Ovary (tissue), 10 donors: ENCODE measurements at regions of chr5 and their contacts with region 1.

Region 1: DNA sequence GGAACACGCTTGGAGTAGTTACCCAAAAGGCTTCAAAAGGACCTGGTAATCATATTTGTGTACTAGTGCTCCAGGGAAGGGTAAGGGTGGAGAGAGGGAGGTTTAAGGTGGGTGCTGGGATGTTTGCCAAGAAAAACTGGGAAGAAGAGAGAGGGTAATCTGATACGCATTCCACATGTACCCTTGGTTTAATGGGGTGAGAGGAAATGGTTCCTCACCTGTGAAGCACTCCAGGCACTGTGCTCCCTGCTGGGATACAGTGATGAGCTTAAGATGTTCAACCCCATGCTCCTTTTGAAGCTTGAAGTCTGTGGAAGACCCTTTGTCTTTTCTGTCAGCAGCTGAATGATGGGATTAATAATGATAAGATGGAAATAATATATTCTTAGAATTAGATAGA is 98.4 kb downstream of the COX7C start:
- DNase-seq: no peak
- H3K4me3 ChIP-seq: no peak overlapping the region
- H3K27ac ChIP-seq: no peak overlapping the region
- H3K4me1 ChIP-seq: no peaks in the 10 kb centered on the region
- H3K27me3 ChIP-seq: no peaks in the 10 kb centered on the region
- CTCF ChIP-seq: no peak
- EP300 ChIP-seq: no peak
- POLR2A ChIP-seq: no peak

Region 2: DNA sequence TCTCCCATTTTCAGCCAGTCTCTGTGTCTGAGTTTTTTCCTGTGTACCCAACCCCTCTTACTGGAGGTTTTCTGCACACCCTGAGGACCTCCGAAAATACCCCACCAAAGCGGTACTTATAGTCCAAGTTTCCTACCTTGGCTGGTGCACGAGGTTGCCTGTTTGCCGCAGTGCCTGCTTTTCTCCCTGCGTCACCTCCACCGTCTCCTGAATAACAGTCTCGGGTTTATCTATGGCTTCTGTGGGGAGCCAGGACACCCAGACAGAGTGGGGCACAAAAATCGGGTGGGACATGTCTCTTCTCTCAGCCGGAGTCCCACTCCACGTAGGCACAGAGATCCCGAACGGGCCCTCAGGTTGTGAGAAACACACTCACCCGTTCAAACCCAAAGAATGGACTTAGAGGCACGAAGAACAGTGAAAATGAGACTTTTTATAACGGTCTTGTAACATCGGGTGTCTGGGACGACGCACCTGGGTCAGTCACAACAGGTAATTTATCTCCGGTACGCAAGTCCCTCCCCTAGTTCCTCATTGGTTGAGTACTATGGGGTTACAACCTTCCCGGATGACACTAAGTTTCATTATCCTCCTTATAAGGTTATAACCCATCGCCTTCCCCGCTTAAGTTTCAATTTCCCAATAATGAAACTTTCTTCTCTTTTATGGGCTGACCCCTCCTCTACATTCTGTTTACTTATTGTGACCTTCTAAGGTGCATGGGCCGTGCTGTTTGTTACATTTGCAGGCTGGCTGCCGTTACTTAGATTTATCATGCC is 1068.6 kb before region 1 on chr5:
- intact Hi-C with region 1: no loop called
- DNase-seq: no peak
- H3K4me3 ChIP-seq: no peak overlapping the region
- H3K27ac ChIP-seq: no peak overlapping the region
- H3K4me1 ChIP-seq: no peaks in the 10 kb centered on the region
- H3K27me3 ChIP-seq: no peaks in the 10 kb centered on the region
- CTCF ChIP-seq: no peak
- EP300 ChIP-seq: no peak
- POLR2A ChIP-seq: no peak

Region 3: DNA sequence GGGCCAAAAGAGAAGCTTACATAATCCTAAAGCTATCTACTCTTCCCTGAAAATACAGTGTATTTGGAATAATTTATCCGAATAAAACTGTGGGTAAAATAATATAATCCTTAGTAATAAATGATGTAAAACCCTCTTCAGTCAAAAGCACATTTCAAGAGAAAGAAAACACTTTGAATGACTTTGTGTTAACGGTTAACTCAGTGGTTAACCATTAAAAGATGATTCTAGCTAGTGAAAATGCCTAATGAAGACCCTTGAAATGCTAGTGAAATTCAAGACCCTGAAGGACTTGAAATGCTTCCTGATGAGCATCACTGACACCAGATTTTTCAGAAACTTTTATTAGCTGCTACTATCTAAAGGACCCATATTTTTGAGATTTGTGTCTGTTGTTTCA is 27.7 kb before region 1 on chr5:
- intact Hi-C with region 1: loop called in 1 of 4 experiments (anchors 2 kb)
- DNase-seq: no peak
- H3K4me3 ChIP-seq: no peak overlapping the region
- H3K27ac ChIP-seq: no peak overlapping the region
- H3K4me1 ChIP-seq: no peaks in the 10 kb centered on the region
- H3K27me3 ChIP-seq: no peaks in the 10 kb centered on the region
- CTCF ChIP-seq: no peak
- EP300 ChIP-seq: no peak
- POLR2A ChIP-seq: no peak